ENCODE measurements at regions of chr2 and their contacts with region 1.

Region 1: DNA sequence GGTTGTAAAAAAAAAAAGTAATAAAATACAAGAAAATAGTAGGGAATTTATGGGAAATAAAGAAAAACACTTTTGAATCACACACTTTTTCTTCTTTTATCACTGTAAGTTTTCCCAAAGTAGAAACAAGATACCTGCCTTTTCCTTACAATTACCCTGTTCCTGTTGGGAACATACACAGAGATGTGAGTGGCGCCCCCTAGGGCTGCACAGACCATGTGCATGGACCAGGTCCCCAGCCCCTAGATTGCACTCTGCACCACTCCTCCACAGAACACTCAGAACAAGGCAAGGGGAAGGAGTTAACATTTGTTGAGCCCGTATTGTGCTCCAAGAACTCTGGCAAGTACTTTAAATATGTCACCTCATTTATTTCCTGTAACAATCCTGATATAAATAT is 118.7 kb upstream of the NRP2 start:
- DNase-seq: peak; percentile 69
- H3K4me3 Mint-ChIP-seq: no peak overlapping the region
- H3K27ac Mint-ChIP-seq: no peak overlapping the region
- H3K4me1 Mint-ChIP-seq: no peaks in the 10 kb centered on the region
- H3K27me3 Mint-ChIP-seq: peaks cover 7% of the 10 kb centered on the region

Region 2: DNA sequence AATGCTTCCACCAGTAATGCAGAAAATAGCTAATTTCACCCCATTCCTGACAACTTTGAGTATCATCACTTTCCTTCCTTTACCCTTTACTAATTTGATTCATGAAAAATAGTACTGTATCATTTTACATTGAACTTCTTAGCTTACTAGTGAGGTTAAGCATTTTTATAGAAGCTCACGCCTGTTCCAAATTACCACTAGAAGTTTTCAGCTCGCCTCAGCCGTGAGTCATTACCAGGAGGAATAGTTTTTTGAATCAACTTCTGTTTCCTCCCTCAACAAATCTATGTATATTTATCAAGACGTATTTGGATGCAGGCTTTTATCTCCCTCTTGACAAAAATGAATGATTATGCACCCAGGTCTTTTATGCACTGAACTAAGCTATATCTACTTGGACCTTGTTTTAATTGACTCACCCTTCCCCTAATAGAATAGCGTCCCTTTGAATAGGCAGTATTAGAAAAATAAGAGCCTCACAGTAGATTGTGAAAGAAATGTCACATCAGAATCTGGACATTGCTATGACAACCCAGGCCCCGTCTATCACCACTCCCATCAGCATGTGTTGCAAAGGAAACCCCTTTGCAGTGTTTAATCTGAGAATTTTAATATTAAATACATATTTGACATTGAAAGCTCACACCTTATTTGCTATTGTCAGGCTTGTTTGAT is 88.8 kb before region 1 on chr2:
- intact Hi-C with region 1: loop called (anchors 10 kb)
- DNase-seq: no peak
- H3K4me3 Mint-ChIP-seq: no peak overlapping the region
- H3K27ac Mint-ChIP-seq: no peak overlapping the region
- H3K4me1 Mint-ChIP-seq: peaks cover 3% of the 10 kb centered on the region
- H3K27me3 Mint-ChIP-seq: peaks cover 43% of the 10 kb centered on the region

Region 3: DNA sequence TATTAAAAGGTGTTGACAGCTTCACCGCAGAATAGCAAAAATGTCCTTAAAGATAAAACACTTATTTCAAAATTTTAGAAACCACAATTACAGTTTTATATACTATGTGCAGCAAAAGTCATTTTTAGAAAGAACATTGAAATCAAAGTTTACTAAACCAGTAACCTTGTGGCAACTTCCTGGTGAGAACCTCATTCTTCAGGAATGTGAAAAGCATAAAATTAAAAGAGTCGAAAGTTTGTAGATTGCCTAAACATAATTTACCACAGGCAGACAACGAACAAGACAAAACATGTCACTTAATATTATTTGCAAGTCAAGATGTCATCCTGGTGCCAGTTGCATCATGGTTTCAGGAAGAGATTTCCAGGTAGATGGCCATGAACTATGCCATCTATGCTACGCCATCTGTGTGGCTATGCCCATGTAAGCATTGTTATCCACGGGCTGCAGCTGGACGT is 10.4 kb after region 1 on chr2:
- intact Hi-C with region 1: no loop called
- DNase-seq: no peak
- H3K4me3 Mint-ChIP-seq: no peak overlapping the region
- H3K27ac Mint-ChIP-seq: no peak overlapping the region
- H3K4me1 Mint-ChIP-seq: no peaks in the 10 kb centered on the region
- H3K27me3 Mint-ChIP-seq: peaks cover 14% of the 10 kb centered on the region

Region 4: GRCh38 chr2:205721057-205721449 is 157.4 kb after region 1 on chr2:
- intact Hi-C with region 1: no loop called
- DNase-seq: no peak
- H3K4me3 Mint-ChIP-seq: no peak overlapping the region
- H3K27ac Mint-ChIP-seq: no peak overlapping the region
- H3K4me1 Mint-ChIP-seq: peaks cover 37% of the 10 kb centered on the region
- H3K27me3 Mint-ChIP-seq: no peaks in the 10 kb centered on the region